Dendritic cell treated with granulocyte-macrophage colony-stimulating factor and Interleukin-4, amounts not matched to agents 40 ng/mL and 50 ng/mL, for 4 days (primary cell): ENCODE measurements at regions of chr13 and their contacts with region 1.

Region 1: DNA sequence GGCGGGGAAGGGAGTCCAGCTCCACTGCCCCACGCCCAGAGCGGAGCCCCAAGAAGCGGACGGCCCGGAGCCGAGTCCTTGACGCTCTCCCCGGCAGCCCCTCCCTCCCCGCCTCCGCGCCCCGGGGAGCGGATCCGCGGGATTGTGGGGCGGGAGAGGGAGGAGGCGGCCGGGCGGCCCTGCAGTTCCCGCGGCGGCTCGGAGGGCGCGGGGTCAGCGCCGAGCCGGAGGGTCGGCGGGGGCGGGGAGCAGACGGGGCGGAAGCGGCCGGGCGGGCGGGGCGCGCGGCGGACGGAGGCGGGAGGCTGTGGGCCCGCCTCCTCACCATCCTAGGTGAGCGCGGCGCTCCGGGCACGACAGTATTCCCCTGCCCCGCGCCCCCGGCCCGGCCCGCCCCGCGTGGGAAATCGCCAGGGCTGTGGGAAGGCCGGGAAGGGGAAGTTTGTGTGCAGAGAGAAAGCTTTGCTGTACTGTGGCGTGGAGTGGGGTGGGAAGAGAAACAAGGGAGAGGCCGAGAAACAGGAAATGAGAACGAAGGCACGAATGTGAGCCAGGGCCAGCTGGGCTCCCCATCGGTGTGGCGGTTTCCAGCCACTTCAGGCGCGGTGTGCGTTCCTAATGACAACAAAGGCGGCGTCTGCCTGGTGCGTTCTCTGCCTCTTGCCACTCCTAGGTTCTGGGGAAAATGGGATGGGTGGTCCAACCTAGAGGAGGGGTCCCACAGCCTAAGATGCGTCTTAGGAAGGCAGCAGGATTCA is 1.3 kb upstream of the KLF12 start:
- H3K4me3 Mint-ChIP-seq: no peak overlapping the region
- H3K27ac Mint-ChIP-seq: peak overlapping the region; percentile 60
- H3K4me1 Mint-ChIP-seq: peaks cover 14% of the 10 kb centered on the region
- H3K27me3 Mint-ChIP-seq: peaks cover 39% of the 10 kb centered on the region

Region 2: DNA sequence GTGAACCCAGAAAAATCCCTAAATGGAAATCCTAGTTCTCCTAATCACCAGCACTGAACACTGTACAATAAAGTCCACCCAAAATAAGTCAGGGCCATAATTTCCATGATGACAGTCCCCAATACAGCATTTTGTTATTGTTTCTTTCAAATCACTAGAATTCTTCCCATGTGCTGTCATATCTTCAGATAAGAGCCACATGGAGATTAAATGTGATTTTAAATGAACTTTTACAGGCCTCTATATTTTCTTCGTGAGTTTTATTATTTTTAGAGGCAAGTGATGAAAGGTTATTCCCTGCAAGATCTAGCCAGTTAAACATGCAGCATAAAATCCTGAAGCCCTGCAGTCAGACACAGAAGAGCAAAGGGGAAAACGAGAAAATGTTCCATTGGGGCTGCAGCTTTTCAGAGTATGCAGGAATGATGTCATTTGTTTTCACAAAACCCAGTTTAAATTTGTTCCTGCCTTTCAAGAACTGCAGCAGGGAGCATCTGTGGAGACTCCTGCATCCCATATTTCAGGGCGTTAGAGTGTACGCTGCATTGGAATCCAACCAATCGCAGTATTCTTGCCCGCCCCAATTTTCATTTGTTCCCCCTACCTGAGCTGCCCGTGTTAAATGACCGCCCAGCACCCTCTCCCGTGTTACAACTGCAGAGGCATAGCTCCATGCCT is 165.9 kb after region 1 on chr13:
- intact Hi-C with region 1: loop called (anchors 5 kb)
- H3K4me3 Mint-ChIP-seq: no peak overlapping the region
- H3K27ac Mint-ChIP-seq: no peak overlapping the region
- H3K4me1 Mint-ChIP-seq: peaks cover 29% of the 10 kb centered on the region
- H3K27me3 Mint-ChIP-seq: no peaks in the 10 kb centered on the region